Heart right ventricle (tissue), 16 donors: ENCODE measurements at regions of chr2 and their contacts with region 1.

Region 1: DNA sequence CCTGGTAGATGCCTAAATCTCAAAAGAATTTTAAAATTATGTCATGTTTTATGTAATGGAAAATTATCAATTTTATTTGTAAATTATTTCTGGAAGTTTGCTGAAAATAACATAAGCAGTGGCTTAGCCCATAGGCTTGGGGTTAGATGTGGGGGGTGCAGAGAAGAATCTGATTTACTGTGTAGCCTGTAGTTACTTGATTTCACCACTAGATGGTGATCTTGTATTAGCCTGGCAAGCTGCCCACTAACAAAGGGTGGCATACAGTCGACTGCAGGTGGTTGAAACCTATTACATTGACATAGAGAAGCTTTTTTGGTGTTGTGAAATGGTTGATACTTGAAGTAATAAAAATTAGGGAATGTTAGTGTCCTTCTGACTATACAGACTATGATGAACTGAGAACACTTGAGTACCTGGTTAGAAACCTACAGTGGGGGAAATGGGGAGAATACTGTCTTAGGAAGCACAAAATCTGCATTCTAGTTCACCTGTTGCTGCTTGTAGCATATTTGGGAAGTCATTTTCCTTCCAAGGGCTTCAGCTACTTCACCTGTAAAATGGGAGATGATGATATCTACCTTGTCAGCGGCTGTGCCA is 191.0 kb upstream of the LHCGR start:
- DNase-seq: peak in 1 of 2 donors; percentile 11
- ATAC-seq: peak in 7 of 8 donors; percentile 58 to 84 (median 73)
- H3K4me3 ChIP-seq: no peak overlapping the region
- H3K27ac ChIP-seq: no peak overlapping the region
- H3K4me1 ChIP-seq: peaks cover 0 to 15% (median 4%) of the 10 kb centered on the region in 9 donors
- H3K27me3 ChIP-seq: no peaks in the 10 kb centered on the region
- CTCF ChIP-seq: peak; percentile 83 to 93 (median 91)

Region 2: DNA sequence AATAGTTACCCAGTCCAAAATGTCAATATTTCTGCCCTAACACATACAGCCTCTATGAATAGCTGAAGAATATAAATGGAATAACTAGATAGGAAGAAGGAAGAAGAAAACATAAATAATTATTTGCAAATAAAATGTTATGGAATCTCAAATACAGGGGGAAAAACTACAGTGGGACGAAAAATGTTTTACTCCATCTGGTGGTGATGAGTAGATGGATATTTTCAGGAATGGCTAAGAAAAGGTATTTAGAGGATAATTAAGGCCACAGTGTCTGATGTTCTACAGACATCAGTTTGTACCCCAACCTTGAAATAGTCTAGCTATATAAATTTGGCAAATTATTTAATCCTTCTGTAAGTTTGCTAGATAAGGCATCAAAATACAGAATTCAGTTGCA is 385.9 kb after region 1 on chr2:
- intact Hi-C with region 1: loop called in 3 of 10 experiments (anchors 10 kb)
- DNase-seq: no peak
- ATAC-seq: no peak
- H3K4me3 ChIP-seq: no peak overlapping the region
- H3K27ac ChIP-seq: no peak overlapping the region
- H3K4me1 ChIP-seq: no peaks in the 10 kb centered on the region
- H3K27me3 ChIP-seq: no peaks in the 10 kb centered on the region
- CTCF ChIP-seq: peak in 5 of 9 donors; percentile 13 to 30 (median 25)

Region 3: DNA sequence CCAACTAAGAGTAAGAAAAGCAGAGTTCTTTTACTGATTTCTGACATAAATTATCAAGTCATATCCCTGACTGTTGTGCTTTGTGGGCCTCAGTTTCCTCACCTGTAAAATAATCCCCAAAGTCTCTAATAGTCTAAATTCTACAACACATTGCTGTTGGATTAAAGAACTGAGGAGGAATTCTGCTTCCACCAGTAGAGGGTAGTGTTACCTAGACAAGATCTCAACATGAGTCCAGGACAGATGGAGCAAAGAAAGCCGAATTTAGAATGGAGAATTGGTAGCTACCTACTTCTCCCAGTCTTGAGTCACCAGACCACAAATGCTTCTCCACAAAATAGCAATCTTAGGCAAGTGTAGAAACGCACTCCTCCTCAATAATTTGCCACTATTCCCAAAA is 670.3 kb after region 1 on chr2:
- intact Hi-C with region 1: loop called in 1 of 10 experiments (anchors 10 kb)
- DNase-seq: no peak
- ATAC-seq: peak in 1 of 8 donors; percentile 51
- H3K4me3 ChIP-seq: no peak overlapping the region
- H3K27ac ChIP-seq: no peak overlapping the region
- H3K4me1 ChIP-seq: no peaks in the 10 kb centered on the region
- H3K27me3 ChIP-seq: no peaks in the 10 kb centered on the region
- CTCF ChIP-seq: peak in 7 of 9 donors; percentile 34 to 56 (median 48)

Region 4: DNA sequence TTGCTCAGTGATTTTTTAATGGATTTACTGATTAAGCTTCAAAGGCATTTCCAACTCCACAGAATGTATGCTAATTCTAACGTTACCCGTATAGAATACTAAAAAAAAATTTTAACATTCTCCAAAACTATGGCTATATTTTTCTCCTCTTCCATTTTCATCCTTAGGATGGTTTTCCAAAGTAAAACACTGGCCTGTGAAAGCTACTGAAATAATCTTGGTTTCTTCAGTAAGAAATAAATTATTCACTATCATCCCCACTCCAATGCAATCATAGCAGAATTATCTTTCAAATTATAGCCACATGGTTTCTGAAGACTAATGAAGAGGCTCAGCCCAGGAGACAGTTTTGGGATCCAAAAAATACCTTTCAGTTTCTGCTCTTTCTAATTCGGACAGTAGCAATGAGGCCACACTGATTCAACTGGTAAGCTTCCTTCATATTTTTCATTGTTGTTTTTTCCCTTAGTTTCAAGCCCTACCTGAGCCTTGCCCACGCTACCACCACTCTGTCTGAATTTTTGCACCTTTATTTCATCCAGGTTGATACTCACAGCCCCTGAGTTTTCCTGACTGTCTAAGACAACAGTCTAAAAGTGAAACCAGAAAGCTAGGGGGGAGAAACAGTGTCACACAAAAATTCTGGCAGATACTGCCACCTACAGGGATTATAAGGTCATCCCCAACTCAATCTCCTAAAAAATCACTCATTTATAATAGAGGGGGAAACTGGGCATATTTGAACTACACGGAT is 1197.5 kb after region 1 on chr2:
- intact Hi-C with region 1: loop called in 3 of 10 experiments (anchors 10 kb)
- DNase-seq: peak in 1 of 2 donors; percentile 5
- ATAC-seq: peak; percentile 51 to 92 (median 74)
- H3K4me3 ChIP-seq: peak overlapping the region in 8 of 10 donors; percentile 7 to 47 (median 36)
- H3K27ac ChIP-seq: peak overlapping the region in 3 of 10 donors; percentile 10 to 51 (median 35)
- H3K4me1 ChIP-seq: peaks cover 0 to 7% (median 0%) of the 10 kb centered on the region in 9 donors
- H3K27me3 ChIP-seq: no peaks in the 10 kb centered on the region
- CTCF ChIP-seq: peak; percentile 12 to 74 (median 60)

Region 5: DNA sequence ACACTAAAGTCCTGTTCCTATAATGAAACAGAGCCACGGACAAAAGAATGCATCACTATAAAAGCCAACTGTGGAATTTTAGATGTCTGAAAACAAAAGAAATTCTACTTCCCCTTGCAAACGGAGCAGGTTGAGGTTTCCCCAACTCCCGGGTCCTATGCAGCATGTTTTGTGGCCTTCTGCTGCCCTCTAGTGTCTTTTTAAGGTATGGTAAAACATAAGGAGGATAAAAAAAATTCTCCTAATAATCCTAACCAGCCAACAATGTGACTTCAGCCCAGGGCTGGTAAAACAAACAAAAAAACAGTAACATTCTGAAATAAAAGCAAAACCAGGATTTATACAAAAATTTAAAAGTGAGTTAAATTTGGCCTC is 1545.9 kb after region 1 on chr2:
- intact Hi-C with region 1: loop called in 2 of 10 experiments (anchors 5 to 10 kb)
- DNase-seq: peak in 1 of 2 donors; percentile 22
- ATAC-seq: peak; percentile 69 to 90 (median 78)
- H3K4me3 ChIP-seq: peak overlapping the region in 4 of 10 donors; percentile 7 to 25 (median 24)
- H3K27ac ChIP-seq: no peak overlapping the region
- H3K4me1 ChIP-seq: peaks cover 0 to 12% (median 7%) of the 10 kb centered on the region in 9 donors
- H3K27me3 ChIP-seq: peaks cover 0 to 23% (median 2%) of the 10 kb centered on the region in 7 donors
- CTCF ChIP-seq: peak; percentile 50 to 81 (median 70)